Right cardiac atrium (tissue), 5 donors: ENCODE measurements at regions of chr9 and their contacts with region 1.

Region 1: GRCh38 chr9:131178382-131178781 is 53.0 kb downstream of the NUP214 start:
- DNase-seq: peak; percentile 69 to 89 (median 85)
- ATAC-seq: peak; percentile 93
- H3K4me3 ChIP-seq: no peak overlapping the region
- H3K27ac ChIP-seq: no peak overlapping the region
- H3K4me1 ChIP-seq: peaks cover 4% of the 10 kb centered on the region
- H3K27me3 ChIP-seq: no peaks in the 10 kb centered on the region

Region 2: DNA sequence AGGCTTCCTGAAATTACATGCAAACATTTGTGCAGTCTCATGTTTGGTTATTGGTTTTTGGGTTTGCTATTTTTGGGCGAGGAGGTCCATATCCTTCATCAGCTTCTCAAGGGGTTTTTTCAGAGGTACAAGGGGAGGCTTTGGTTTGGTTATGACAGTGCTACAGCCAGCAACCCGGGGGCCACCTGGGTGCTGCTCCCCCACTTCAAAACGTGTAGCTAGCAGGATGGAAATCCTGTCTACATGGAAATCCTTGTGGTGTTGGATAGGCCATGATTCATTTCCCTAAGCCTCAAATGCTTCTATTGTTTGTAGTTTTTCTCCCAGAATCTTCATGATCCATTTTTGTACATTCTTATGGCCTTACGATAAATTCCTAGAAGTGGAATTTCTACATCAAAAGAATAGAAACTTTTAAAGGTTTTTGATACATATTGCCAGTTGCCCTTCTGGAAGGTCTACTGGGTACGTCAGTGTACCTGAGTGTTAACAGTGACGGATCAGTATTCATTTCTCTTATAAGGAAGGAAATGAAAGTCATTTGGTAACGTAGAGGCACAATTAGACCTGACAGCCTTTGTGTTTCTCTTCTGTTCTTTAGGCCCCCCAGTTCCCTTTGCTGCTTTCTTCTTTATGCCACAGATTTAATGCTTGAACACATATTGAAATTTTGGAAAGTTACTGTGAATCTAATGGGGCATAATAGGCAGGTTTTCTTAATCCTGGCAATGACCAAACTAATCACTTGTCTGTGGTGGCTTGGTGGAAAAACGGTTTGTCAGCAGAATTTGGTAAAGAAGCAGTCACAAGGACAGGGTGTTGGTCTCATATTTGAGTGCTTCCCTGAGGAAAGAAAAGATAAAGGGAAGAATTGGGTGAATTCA is 413.0 kb before region 1 on chr9:
- intact Hi-C with region 1: no loop called
- DNase-seq: no peak
- ATAC-seq: no peak
- H3K4me3 ChIP-seq: no peak overlapping the region
- H3K27ac ChIP-seq: no peak overlapping the region
- H3K4me1 ChIP-seq: peaks cover 16% of the 10 kb centered on the region
- H3K27me3 ChIP-seq: no peaks in the 10 kb centered on the region

Region 3: DNA sequence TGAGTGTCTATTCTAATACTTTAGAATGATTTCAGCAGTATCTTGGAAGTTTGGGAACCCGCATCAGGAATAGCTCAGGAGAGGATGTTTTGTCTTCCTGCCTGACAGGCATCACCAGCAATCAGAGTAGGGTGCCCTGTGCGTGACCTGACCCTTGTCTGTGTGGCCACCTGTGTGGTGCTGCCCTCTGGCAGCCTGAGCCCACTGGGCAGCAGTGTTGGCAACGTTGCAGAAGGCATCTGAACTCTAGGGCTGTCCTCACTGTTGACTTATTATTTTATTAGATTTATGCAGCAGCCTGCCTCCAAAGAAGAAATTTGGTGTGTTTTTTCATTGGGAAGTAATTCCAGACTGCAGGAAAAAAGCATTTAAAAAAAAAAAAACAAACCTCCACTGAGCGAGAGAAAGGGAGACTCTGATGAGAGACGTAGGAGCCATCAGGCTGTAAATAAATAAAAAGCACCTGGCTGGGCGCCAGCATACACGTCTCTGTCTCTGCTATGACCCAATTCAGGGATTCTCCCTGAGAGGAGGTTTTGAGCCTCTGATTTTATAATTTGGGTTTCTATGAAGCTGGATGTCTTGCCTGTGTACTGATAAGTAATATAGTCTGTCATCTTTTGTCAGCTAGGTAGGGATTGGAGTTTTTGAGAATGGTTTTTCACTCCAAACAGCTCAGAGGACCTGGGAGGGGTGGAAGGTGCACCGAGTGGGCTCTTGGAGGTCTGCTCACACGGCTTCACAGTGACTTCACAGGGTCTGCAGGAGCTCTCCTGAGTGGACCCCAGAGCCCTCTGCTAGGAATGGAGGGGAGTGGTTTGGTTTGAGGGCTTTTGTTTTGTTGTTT is 49.0 kb after region 1 on chr9:
- intact Hi-C with region 1: loop called in 1 of 4 experiments (anchors 5 kb)
- DNase-seq: peak; percentile 35 to 77 (median 63)
- ATAC-seq: peak; percentile 15 to 38
- H3K4me3 ChIP-seq: no peak overlapping the region
- H3K27ac ChIP-seq: no peak overlapping the region
- H3K4me1 ChIP-seq: peaks cover 5% of the 10 kb centered on the region
- H3K27me3 ChIP-seq: no peaks in the 10 kb centered on the region

Region 4: GRCh38 chr9:131277910-131278701 is 99.7 kb after region 1 on chr9:
- intact Hi-C with region 1: loop called (anchors 2 to 10 kb)
- DNase-seq: peak; percentile 87 to 93 (median 93)
- ATAC-seq: peak; percentile 64 to 69
- H3K4me3 ChIP-seq: peak overlapping the region; percentile 86
- H3K27ac ChIP-seq: peak overlapping the region; percentile 83
- H3K4me1 ChIP-seq: no peaks in the 10 kb centered on the region
- H3K27me3 ChIP-seq: no peaks in the 10 kb centered on the region